ENCODE measurements at regions of chr4 and their contacts with region 1.

Region 1: GRCh38 chr4:127849505-127850234 is 31.0 kb upstream of the PLK4 start:
- DNase-seq: no peak

Region 2: DNA sequence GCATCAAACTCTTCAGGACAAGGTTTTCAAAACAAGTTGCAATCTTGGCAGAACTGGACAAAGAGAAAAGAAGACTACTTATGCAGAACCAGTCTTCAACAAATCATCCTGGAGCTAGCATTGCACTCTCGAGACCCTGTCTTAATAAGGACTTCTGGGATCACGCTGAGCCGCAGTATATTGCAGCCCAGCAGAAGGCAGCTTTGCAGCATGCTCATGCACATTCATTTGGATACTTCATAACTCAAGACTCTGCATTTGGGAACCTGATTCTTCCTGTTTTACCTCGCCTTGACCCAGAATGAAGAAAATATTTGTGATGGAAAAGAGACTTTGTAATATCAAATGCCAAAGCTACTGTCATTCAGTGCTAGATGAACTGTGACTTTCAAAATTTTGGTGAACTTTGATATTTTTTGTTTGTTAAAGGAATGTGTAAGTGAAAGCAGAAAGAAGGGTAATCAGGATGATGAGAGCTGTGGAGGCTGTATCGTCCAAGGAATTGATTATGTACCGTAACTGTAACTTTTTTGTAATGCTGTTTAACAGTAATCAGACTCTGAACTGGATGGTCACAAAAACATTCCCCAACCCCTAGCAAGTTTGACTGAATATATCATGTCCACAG is 40.4 kb before region 1 on chr4:
- intact Hi-C with region 1: no loop called
- DNase-seq: no peak

Region 3: GRCh38 chr4:128737098-128737513 is 887.4 kb after region 1 on chr4:
- intact Hi-C with region 1: loop called in 1 of 2 experiments (anchors 5 kb)
- DNase-seq: no peak